ENCODE measurements at regions of chr5 and their contacts with region 1.

Region 1: GRCh38 chr5:66306105-66306843 is 162.2 kb downstream of the SREK1 start:
- H3K4me3 ChIP-seq: no peak overlapping the region
- H3K27ac ChIP-seq: no peak overlapping the region
- H3K4me1 ChIP-seq: no peaks in the 10 kb centered on the region
- CTCF ChIP-seq: peak; percentile 44; the same call in 1 of the 2 replicates

Region 2: GRCh38 chr5:66291771-66292170 is 14.5 kb before region 1 on chr5:
- CTCF ChIA-PET with region 1: interaction called, 15 read pairs
- POLR2A ChIA-PET with region 1: no interaction called
- H3K4me3 ChIP-seq: no peak overlapping the region
- H3K27ac ChIP-seq: no peak overlapping the region
- H3K4me1 ChIP-seq: no peaks in the 10 kb centered on the region
- CTCF ChIP-seq: no peak

Region 3: GRCh38 chr5:66337626-66338226 is 31.5 kb after region 1 on chr5:
- CTCF ChIA-PET with region 1: interaction called, 18 read pairs
- POLR2A ChIA-PET with region 1: no interaction called
- H3K4me3 ChIP-seq: no peak overlapping the region
- H3K27ac ChIP-seq: no peak overlapping the region
- H3K4me1 ChIP-seq: no peaks in the 10 kb centered on the region
- CTCF ChIP-seq: no peak

Region 4: DNA sequence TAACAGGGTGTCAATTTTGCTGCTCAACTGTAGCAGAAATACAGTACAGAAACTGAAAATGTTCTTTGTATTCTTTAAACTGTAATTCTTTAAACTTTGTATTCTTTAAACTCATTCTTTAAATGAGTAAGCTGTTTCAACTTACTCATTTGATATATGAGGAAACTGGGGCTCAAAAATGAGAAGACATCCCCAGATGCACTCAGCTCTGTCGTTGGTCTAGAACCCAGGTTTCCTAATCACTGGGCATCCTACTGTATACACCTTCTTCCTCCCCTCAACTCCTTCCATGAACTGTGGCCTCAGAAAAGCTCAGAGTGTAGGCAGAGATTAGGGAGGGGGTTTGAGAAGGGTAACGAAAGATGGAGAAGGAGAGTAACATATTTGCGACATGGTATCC is 153.5 kb after region 1 on chr5:
- CTCF ChIA-PET with region 1: no interaction called
- POLR2A ChIA-PET with region 1: no interaction called
- H3K4me3 ChIP-seq: no peak overlapping the region
- H3K27ac ChIP-seq: no peak overlapping the region
- H3K4me1 ChIP-seq: no peaks in the 10 kb centered on the region
- CTCF ChIP-seq: no peak

Region 5: DNA sequence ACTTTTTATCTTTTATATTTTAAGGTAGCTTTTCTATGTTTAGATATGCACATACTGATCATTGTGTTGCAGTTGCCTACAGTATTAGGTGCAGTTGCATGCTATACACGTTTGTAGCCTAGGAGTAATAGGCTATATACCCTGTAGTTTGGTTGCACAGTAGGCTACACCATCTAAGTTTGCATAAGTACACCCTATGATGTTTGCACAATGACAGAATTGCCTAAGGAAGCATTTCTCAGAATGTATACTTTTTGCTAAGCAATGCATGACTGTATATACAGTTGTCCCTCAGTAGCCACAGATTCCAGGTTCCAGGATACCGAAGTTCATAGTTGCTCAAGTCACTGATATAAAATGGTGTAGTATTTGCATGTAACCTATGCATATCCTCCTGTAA is 458.7 kb after region 1 on chr5:
- CTCF ChIA-PET with region 1: interaction called, 21 read pairs
- POLR2A ChIA-PET with region 1: no interaction called
- H3K4me3 ChIP-seq: no peak overlapping the region
- H3K27ac ChIP-seq: no peak overlapping the region
- H3K4me1 ChIP-seq: no peaks in the 10 kb centered on the region
- CTCF ChIP-seq: no peak

Region 6: DNA sequence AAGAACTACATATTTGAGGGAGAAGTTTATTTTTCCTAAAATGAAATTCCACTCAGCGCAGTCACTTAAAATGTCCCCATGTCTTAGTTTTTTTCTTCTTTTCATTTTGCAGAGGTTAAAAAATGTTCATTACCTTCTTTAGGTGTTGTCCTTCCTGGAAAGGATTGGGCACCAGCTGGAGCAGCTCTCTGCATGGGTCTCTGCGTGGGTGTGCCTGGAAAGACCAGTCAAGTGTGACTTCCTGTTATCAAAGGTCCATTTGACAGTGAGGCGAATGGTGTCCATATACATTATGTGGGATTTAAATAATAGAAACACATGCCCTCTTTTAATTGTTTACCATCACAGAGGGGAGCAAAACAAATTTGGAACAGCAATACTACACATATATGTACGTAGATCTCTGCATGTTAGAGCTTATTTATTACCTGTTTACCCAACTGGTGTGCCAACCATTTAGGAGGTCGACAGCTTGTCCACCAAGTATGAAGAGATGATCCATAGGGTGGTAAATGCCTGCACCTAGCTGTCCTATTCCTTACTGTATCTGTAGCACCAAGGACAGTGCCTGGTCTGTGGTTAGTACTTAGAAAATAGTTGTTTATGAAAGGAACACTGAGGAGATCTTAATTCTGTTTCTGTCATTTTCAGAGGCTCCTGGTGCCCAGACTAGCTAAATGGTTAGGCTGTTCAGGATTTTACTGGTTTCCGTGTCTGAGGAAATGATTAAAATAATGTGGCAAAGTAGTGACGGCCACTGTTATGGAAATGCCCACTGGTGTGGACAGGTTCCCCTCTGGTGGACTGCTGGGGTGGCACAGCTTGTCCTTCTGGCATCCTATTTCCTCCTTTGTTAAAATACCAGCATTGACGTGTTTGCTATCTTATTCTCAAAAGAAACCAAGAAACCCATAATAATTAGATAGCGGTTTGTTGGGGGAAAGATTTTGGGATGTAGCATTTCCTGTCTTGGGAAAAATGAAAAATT is 490.3 kb after region 1 on chr5:
- CTCF ChIA-PET with region 1: interaction called, 13 read pairs
- POLR2A ChIA-PET with region 1: no interaction called
- H3K4me3 ChIP-seq: no peak overlapping the region
- H3K27ac ChIP-seq: no peak overlapping the region
- H3K4me1 ChIP-seq: no peaks in the 10 kb centered on the region
- CTCF ChIP-seq: no peak